B cell (primary cell): ENCODE measurements at regions of chr16 and their contacts with region 1.

Region 1: DNA sequence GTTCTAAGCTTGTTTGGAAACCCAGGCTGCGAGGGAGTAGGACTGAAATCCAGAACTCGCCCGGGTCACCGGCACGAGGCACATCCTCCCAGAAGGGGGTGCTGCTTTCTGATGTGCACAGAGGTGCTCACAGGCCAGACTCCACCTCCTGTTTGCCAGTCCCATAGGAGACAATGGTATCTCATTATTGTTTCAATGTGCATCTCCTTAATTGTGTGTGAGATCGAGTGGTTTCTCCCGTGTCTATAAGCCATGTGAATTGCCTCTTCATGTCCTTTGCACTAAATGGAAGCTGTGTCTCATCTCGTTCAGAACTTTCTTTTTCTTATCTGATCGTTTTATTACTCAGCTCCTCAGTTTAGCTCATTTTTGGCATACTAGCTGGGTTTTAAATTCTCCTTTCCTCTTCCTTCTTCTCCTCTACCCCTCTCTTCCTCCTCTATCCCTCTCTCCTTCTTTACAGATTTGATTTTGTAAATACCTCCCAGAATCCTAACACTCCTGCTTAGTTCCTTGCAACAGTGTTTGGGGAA is 32.1 kb upstream of the PRKCB start:
- DNase-seq: peak; percentile 80
- ATAC-seq: peak; percentile 78
- H3K4me3 ChIP-seq: peak overlapping the region in 2 of 5 experiments; percentile 11 to 37
- H3K4me3 Mint-ChIP-seq: peak overlapping the region; percentile 52
- H3K27ac ChIP-seq: no peak overlapping the region
- H3K27ac Mint-ChIP-seq: peak overlapping the region; percentile 12
- H3K4me1 ChIP-seq: peaks cover 25 to 43% of the 10 kb centered on the region in 2 donors
- H3K4me1 Mint-ChIP-seq: peaks cover 35% of the 10 kb centered on the region
- H3K27me3 ChIP-seq: no peaks in the 10 kb centered on the region
- H3K27me3 Mint-ChIP-seq: no peaks in the 10 kb centered on the region
- CTCF ChIP-seq: peak; percentile 76

Region 2: DNA sequence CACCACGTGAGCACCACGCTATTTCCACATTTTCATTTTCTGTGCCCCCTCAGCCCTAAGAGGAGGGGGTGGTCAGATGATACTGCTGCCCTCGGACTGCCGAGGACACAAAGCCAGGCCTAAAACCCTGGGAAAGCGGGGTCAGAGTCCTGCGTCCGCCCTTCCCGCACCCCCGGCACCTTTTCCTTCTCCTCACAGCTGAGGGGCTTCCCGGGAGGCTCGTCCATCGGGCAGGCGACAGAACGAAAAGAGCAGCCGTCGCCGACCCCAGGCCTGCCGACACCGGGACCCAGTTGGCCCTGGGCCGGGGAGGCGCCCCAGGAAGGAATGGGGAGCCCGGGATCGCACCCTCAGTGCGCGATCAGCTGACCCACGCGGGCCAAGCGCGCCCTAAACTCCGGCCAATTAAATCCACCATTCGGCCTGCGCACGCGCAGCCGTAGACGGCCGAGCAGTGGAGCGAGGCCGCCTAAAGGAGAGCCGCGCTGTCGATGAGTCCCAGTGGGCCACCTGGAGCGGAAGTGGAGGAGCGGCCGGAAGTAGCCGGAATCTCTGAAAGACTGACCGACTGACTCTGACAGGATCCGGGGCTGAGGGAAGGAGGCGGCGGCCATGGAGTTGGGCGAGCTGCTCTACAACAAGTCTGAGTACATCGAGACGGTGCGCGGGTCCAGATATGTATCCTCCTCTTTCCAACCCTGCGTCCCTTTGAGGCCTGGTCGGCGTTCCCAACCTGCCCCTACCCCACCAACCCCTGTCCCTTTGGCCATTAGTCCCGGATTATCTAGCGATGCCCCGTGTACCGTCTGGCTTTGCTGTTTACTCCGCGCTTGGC is 162.5 kb before region 1 on chr16 and contains the starts of genes DCTN5 and PALB2:
- CTCF ChIA-PET with region 1: no interaction called
- POLR2A ChIA-PET with region 1: no interaction called
- intact Hi-C with region 1: no loop called
- DNase-seq: peak; percentile 91
- ATAC-seq: peak; percentile 95
- H3K4me3 ChIP-seq: peak within 1 kb of the TSS; percentile 89 to 100 (median 96)
- H3K4me3 Mint-ChIP-seq: peak within 1 kb of the TSS; percentile 99
- H3K27ac ChIP-seq: peak within 1 kb of the TSS; percentile 80 to 84
- H3K27ac Mint-ChIP-seq: peak within 1 kb of the TSS; percentile 98
- H3K4me1 ChIP-seq: peaks cover 13 to 20% of the 10 kb centered on the region in 2 donors
- H3K4me1 Mint-ChIP-seq: peaks cover 36% of the 10 kb centered on the region
- H3K27me3 ChIP-seq: no peaks in the 10 kb centered on the region
- H3K27me3 Mint-ChIP-seq: no peaks in the 10 kb centered on the region
- CTCF ChIP-seq: no peak
- total RNA-seq, gene DCTN5: 58.3 and 62.3 TPM in 2 replicates
- total RNA-seq, gene PALB2: 14.9 and 16.3 TPM in 2 replicates

Region 3: GRCh38 chr16:23835390-23836077 is 31.9 kb after region 1 on chr16 and contains the start of gene PRKCB:
- CTCF ChIA-PET with region 1: interaction called, 17 read pairs
- POLR2A ChIA-PET with region 1: interaction called, 7 read pairs
- intact Hi-C with region 1: loop called (anchors 1 kb)
- DNase-seq: peak; percentile 93
- ATAC-seq: peak; percentile 83
- H3K4me3 ChIP-seq: peak within 1 kb of the TSS; percentile 78 to 98 (median 88)
- H3K4me3 Mint-ChIP-seq: peak within 1 kb of the TSS; percentile 99
- H3K27ac ChIP-seq: peak within 1 kb of the TSS; percentile 7 to 56
- H3K27ac Mint-ChIP-seq: peak within 1 kb of the TSS; percentile 96
- H3K4me1 ChIP-seq: peaks cover 34 to 37% of the 10 kb centered on the region in 2 donors
- H3K4me1 Mint-ChIP-seq: peaks cover 48% of the 10 kb centered on the region
- H3K27me3 ChIP-seq: no peaks in the 10 kb centered on the region
- H3K27me3 Mint-ChIP-seq: no peaks in the 10 kb centered on the region
- CTCF ChIP-seq: no peak
- total RNA-seq, gene PRKCB: 373 and 397 TPM in 2 replicates

Region 4: GRCh38 chr16:23863511-23864422 is 60.1 kb after region 1 on chr16:
- CTCF ChIA-PET with region 1: interaction called, 39 read pairs
- POLR2A ChIA-PET with region 1: no interaction called
- intact Hi-C with region 1: no loop called
- DNase-seq: peak; percentile 82
- ATAC-seq: peak; percentile 80
- H3K4me3 ChIP-seq: peak overlapping the region; percentile 28 to 68 (median 55)
- H3K4me3 Mint-ChIP-seq: peak overlapping the region; percentile 89
- H3K27ac ChIP-seq: peak overlapping the region; percentile 54 to 76
- H3K27ac Mint-ChIP-seq: peak overlapping the region; percentile 92
- H3K4me1 ChIP-seq: peaks cover 92 to 94% of the 10 kb centered on the region in 2 donors
- H3K4me1 Mint-ChIP-seq: peaks cover 93% of the 10 kb centered on the region
- H3K27me3 ChIP-seq: no peaks in the 10 kb centered on the region
- H3K27me3 Mint-ChIP-seq: no peaks in the 10 kb centered on the region
- CTCF ChIP-seq: no peak

Region 5: GRCh38 chr16:23959072-23959751 is 155.6 kb after region 1 on chr16:
- CTCF ChIA-PET with region 1: interaction called, 16 read pairs
- POLR2A ChIA-PET with region 1: interaction called, 3 read pairs
- intact Hi-C with region 1: no loop called
- DNase-seq: no peak
- ATAC-seq: peak; percentile 55
- H3K4me3 ChIP-seq: peak overlapping the region in 1 of 5 experiments; percentile 49
- H3K4me3 Mint-ChIP-seq: peak overlapping the region; percentile 59
- H3K27ac ChIP-seq: peak overlapping the region; percentile 79 to 88
- H3K27ac Mint-ChIP-seq: peak overlapping the region; percentile 87
- H3K4me1 ChIP-seq: peaks cover 81 to 84% of the 10 kb centered on the region in 2 donors
- H3K4me1 Mint-ChIP-seq: peaks cover 87% of the 10 kb centered on the region
- H3K27me3 ChIP-seq: no peaks in the 10 kb centered on the region
- H3K27me3 Mint-ChIP-seq: no peaks in the 10 kb centered on the region
- CTCF ChIP-seq: no peak

Region 6: GRCh38 chr16:24036614-24037013 is 233.0 kb after region 1 on chr16:
- CTCF ChIA-PET with region 1: interaction called, 296 read pairs
- POLR2A ChIA-PET with region 1: interaction called, 7 read pairs
- intact Hi-C with region 1: loop called (anchors 1 kb)
- DNase-seq: peak; percentile 69
- ATAC-seq: peak; percentile 33
- H3K4me3 ChIP-seq: no peak overlapping the region
- H3K4me3 Mint-ChIP-seq: peak overlapping the region; percentile 59
- H3K27ac ChIP-seq: no peak overlapping the region
- H3K27ac Mint-ChIP-seq: peak overlapping the region; percentile 73
- H3K4me1 ChIP-seq: peaks cover 27 to 34% of the 10 kb centered on the region in 2 donors
- H3K4me1 Mint-ChIP-seq: peaks cover 54% of the 10 kb centered on the region
- H3K27me3 ChIP-seq: no peaks in the 10 kb centered on the region
- H3K27me3 Mint-ChIP-seq: no peaks in the 10 kb centered on the region
- CTCF ChIP-seq: peak; percentile 84

Region 7: DNA sequence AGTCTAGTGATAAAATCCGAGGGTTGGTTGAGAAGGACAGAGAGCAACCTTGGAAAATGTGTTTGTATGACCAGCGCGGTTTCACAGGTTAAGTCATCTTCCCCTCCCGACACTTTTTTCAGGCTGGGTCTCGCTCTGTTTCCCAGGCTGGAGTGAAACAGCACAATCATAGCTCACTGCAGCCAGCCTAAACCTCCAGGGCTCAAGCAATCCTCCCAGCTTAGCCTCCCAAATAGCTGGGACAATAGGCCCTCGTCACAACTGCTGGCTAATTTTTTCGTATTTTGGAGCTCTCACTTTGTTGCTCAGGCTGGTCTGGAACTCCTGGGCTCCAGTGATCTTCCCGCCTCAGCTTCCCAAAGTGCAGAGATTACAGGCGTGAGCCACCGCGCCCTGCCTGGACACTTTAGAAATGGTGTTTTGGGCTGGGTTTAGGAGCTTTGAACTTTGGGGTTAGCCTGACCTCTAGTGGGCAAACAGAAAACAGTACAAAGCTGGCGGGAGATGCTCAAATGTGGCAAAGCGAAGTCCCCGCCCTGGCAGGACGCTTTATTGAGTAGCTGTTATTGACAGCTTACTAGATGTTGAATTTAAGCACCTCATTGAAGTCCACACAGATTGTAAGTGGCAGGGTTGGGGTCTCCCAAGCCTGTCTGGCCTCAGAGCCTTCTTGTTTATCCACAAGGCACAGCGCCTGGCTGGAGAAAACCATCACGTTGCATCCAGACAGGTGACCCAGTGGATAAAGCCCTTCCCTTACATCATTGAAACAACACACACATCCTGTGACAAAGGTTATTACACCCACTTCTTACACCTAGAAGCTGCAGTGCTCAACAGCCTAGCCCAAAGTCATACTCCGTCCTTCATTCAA is 701.1 kb after region 1 on chr16:
- CTCF ChIA-PET with region 1: interaction called, 37 read pairs
- POLR2A ChIA-PET with region 1: interaction called, 5 read pairs
- intact Hi-C with region 1: no loop called
- DNase-seq: peak; percentile 79
- ATAC-seq: peak; percentile 80
- H3K4me3 ChIP-seq: no peak overlapping the region
- H3K4me3 Mint-ChIP-seq: no peak overlapping the region
- H3K27ac ChIP-seq: no peak overlapping the region
- H3K27ac Mint-ChIP-seq: no peak overlapping the region
- H3K4me1 ChIP-seq: no peaks in the 10 kb centered on the region
- H3K4me1 Mint-ChIP-seq: peaks cover 1% of the 10 kb centered on the region
- H3K27me3 ChIP-seq: peaks cover 0 to 9% (median 1%) of the 10 kb centered on the region in 4 experiments
- H3K27me3 Mint-ChIP-seq: peaks cover 35% of the 10 kb centered on the region
- CTCF ChIP-seq: peak; percentile 87